A549 (cell line): ENCODE measurements at regions of chr2 and their contacts with region 1.

Region 1: DNA sequence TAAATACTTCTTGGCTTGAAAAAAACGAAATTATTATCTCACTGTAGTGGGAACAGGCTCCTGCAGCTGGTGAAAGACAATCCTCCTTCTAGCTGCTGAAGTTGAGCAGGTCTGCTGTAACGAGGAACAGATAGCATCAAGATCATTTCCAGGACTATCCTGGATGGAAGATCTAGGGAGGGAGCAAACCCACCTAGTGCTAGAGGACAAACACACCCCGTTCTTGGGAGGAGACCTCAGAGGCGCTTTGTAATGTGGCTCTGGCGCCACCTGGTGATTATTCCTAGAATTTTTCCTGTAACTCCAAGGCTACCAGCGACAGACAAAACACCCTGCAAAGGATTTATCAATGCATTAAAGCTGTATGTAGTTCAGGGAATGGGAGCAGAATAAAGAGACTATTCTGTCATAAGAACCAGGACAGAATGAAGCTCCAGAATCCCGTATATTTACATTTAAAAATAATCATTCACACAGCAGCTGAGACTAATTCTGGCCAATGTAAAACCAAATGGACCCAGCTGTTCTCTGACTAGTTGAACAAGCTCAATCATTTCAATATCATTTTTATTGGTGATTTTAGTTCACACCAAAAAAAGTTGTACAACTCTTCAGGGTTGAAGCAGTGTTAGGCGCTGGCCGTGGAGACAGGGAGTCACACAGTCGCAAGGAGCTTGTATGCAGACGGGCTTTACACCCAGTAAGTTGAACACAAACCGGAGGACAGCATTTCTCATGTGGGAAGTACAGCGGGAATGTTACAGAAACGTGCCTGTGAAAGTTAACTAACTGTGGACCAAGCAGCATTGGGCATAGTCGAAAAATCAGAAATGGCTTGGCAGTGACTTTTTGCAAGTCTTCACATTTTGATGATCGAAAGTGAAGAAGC is 290.3 kb downstream of the TRIB2 start:
- DNase-seq: peak; percentile 41 to 63
- ATAC-seq: peak; percentile 84 to 98
- H3K4me3 ChIP-seq: no peak overlapping the region
- H3K27ac ChIP-seq: no peak overlapping the region
- H3K4me1 ChIP-seq: no peaks in the 10 kb centered on the region
- CTCF ChIP-seq: peak; percentile 90
- EP300 ChIP-seq: no peak
- POLR2A ChIP-seq: no peak
- RAD21 ChIP-seq: peak; percentile 85 to 88

Region 2: DNA sequence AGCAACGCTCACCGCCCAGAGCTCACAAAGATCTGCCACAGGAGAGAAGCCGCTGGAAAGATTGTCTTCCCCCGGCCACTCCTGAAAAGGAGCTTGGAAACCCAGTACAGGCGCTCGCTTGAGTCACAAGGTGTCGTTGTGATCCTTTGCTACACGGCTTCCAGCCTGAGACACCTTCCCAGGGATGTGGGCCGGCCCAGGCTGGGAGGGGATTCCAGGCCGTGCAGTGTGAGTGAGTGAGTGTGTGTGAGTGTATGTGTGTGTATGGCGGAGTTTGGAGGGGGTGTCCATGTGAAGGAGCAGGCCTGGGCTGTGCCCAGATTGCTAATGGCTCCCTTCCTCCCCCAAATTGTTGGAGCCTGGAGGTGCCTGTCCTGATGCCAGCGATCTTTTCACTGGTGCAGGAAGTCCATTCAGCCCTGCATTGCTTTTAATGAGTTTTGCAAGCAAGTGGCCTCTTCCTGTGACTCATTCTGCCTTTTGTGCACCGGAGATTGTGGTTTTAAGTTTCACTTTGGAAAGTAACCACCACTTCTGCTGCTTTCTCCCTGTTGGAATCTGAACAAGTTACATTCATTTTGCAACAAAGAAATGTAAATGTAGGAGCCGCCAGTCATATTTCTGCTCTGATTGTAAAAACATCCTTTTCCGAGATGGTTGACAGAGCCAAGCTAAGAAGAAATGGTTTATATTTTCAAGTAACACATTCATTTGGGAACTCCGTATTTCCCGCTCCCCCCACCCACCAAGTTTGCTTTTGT is 1176.9 kb before region 1 on chr2:
- CTCF ChIA-PET with region 1: interaction called, 36 read pairs
- POLR2A ChIA-PET with region 1: no interaction called
- DNase-seq: peak; percentile 79 to 89
- ATAC-seq: peak; percentile 95 to 96
- H3K4me3 ChIP-seq: peak overlapping the region; percentile 13
- H3K27ac ChIP-seq: peak overlapping the region; percentile 65 to 77
- H3K4me1 ChIP-seq: peaks cover 16% of the 10 kb centered on the region
- CTCF ChIP-seq: peak; percentile 69
- EP300 ChIP-seq: no peak; a peak in 1 of 5 replicates
- POLR2A ChIP-seq: 0 out of 2 replicates have a peak, but pooled peaks have one; percentile 14
- RAD21 ChIP-seq: peak; percentile 85 to 86

Region 3: DNA sequence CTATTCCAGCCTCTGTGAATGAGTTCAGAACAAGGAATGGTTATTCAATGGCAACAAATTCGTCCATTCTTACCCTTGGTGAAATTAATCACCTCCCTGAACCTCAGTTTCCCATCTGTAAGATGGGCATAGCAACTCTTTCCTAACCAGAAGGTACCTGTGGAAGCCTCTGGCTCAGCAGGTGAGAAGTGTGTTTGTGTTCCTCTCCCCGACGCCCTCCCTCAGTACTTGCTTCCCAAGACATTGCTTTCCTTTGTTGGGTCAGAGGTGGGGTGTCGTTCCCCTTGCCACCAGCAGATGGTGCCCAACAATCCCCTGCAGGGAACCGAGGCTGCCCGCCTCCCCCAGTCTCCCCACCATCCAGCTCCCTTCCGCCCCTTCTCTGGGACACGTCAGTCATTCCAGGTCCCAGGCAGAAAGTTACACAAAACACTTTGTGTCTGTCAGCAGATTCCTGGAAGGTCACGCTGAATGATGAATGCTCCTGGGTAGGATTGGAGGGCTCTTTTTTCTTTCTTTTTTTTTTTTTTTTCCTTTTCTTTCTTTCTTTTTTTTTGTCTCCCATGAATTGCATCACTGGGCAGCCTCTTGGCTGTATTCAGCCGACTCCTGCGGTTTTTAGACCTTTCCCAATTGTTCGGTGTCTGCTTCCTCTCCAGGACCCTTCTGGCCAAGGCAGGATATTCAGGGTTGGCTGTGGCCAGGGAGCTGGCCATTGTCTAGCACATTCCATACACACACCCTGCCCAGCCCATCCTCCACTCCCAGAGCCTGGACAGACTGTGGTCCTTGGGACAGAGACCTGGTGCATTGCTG is 1143.4 kb before region 1 on chr2:
- CTCF ChIA-PET with region 1: interaction called, 20 read pairs
- POLR2A ChIA-PET with region 1: no interaction called
- DNase-seq: peak; percentile 73 to 87
- ATAC-seq: peak; percentile 88 to 95
- H3K4me3 ChIP-seq: peak overlapping the region; percentile 19; the same call in 1 of the 3 replicates
- H3K27ac ChIP-seq: 0 out of 6 replicates have a peak overlapping the region, but pooled peaks of 1 of the 2 experiments have one; percentile 24
- H3K4me1 ChIP-seq: no peaks in the 10 kb centered on the region
- CTCF ChIP-seq: peak; percentile 89
- EP300 ChIP-seq: no peak
- POLR2A ChIP-seq: no peak
- RAD21 ChIP-seq: peak; percentile 85 to 86

Region 4: DNA sequence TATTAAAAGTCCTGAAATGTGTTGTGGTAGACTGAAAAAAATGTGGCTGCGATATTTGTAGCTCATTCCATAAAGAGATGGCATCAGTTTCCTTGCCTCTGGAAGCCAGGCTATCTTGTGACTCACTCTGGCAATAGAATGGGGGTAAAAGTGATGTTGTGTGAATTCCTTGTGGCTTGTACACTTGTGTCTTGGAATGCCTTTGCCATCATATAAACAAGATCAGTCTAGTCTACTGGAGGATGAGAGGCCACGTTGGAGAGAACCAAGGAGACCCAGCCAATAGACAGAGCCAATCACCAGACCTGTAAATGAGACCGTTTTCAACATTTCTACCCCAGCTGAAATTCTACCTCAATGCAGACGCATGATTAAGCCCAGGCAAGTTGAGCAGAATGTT is 36.2 kb before region 1 on chr2:
- CTCF ChIA-PET with region 1: interaction called, 12 read pairs
- POLR2A ChIA-PET with region 1: no interaction called
- DNase-seq: no peak
- ATAC-seq: no peak
- H3K4me3 ChIP-seq: no peak overlapping the region
- H3K27ac ChIP-seq: no peak overlapping the region
- H3K4me1 ChIP-seq: no peaks in the 10 kb centered on the region
- CTCF ChIP-seq: no peak
- EP300 ChIP-seq: no peak
- POLR2A ChIP-seq: no peak
- RAD21 ChIP-seq: no peak

Region 5: DNA sequence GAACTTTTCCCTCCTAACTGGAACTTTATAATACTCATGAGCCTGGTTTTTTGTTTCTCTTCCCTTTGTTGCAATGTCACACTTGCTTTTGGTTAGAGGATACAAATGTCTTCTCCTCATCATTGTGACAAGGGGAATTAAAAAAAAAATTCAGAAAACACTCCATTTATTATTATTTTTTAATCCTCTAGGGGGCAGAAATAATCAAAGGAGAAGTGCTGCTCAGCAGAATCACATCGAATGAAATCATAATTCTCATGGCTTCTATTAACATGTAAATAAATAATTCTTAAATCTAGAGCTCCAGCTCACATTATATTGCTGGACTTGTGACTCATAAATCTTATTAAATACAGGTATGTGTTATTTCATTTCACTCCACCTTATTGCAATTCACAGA is 16.6 kb before region 1 on chr2:
- CTCF ChIA-PET with region 1: interaction called, 30 read pairs
- POLR2A ChIA-PET with region 1: no interaction called
- DNase-seq: no peak
- ATAC-seq: no peak
- H3K4me3 ChIP-seq: no peak overlapping the region
- H3K27ac ChIP-seq: no peak overlapping the region
- H3K4me1 ChIP-seq: no peaks in the 10 kb centered on the region
- CTCF ChIP-seq: peak; percentile 31; the same call in 2 of the 3 replicates
- EP300 ChIP-seq: no peak
- POLR2A ChIP-seq: no peak
- RAD21 ChIP-seq: 0 out of 5 replicates have a peak, but pooled peaks of 1 of the 2 experiments have one; percentile 10

Region 6: DNA sequence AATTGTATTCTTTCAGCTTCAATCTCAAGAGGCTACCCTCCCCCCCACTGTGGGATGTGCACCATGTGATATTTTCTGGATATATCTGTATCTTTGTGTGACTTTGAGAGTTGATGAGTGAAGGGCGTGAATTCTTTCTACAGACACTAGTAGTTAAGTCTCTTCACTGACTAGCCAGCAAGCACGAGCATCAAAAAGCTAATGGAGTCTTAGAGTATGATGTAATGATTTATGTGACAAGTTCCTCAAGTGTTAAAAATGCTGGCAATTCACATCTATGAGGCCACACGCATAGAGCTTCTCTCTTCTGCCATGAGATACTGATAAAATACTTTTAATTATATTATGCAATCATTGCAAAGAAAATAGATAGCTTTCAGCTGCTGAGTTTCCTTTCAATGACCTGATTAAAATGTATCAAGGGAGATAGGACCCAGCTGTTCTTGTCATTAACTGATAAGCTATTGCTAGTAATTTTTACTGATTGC is 14.4 kb after region 1 on chr2:
- CTCF ChIA-PET with region 1: interaction called, 13 read pairs
- POLR2A ChIA-PET with region 1: no interaction called
- DNase-seq: no peak
- ATAC-seq: no peak
- H3K4me3 ChIP-seq: no peak overlapping the region
- H3K27ac ChIP-seq: no peak overlapping the region
- H3K4me1 ChIP-seq: no peaks in the 10 kb centered on the region
- CTCF ChIP-seq: no peak
- EP300 ChIP-seq: no peak
- POLR2A ChIP-seq: no peak
- RAD21 ChIP-seq: no peak

Region 7: GRCh38 chr2:13884291-13884976 is 877.4 kb after region 1 on chr2:
- CTCF ChIA-PET with region 1: no interaction called
- POLR2A ChIA-PET with region 1: no interaction called
- DNase-seq: no peak
- ATAC-seq: no peak
- H3K4me3 ChIP-seq: no peak overlapping the region
- H3K27ac ChIP-seq: no peak overlapping the region
- H3K4me1 ChIP-seq: no peaks in the 10 kb centered on the region
- CTCF ChIP-seq: no peak
- EP300 ChIP-seq: no peak
- POLR2A ChIP-seq: no peak
- RAD21 ChIP-seq: no peak